ENCODE measurements at regions of chr6 and their contacts with region 1.

Region 1: DNA sequence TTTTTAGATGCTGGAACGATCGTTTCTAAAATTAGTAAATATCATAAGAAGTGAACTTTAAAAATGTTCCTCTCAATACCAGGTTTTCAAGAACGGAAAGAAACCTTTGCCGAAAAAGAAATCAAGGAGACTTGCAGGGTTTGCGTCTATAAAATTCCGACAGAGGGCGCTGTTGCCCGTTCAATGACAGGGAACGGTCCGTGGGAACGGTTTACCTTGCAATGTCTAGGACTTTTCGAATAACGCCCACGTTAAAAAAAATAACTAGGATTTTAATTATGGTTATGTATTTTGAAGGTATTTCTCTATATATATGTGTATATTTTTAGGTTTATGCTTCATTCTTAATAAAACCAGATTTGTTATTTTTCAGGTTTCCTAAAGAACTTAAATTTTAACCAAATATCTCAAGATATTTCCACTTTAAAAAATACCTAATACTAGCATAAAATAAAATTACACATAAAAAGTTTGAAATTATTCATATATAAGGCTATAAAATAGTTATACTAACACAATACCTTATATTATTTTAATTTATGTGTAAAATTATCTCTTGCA is 2.5 kb upstream of the TFAP2B start:
- DNase-seq: peak; percentile 70 to 81 (median 72)
- ATAC-seq: peak; percentile 88 to 94 (median 91)
- H3K4me3 ChIP-seq: peak overlapping the region; percentile 32 to 61 (median 48)
- H3K27ac ChIP-seq: no peak overlapping the region
- H3K4me1 ChIP-seq: peaks cover 0 to 8% (median 3%) of the 10 kb centered on the region in 4 donors
- H3K27me3 ChIP-seq: peaks cover 9 to 44% of the 10 kb centered on the region in 2 donors
- CTCF ChIP-seq: peak; percentile 79 to 86 (median 82)
- POLR2A ChIP-seq: no peak

Region 2: GRCh38 chr6:50850223-50851048 is 34.2 kb after region 1 on chr6:
- intact Hi-C with region 1: no loop called
- DNase-seq: no peak
- ATAC-seq: peak; percentile 51 to 76 (median 63)
- H3K4me3 ChIP-seq: peak overlapping the region in 1 of 3 donors; percentile 8
- H3K27ac ChIP-seq: no peak overlapping the region
- H3K4me1 ChIP-seq: peaks cover 0 to 13% (median 0%) of the 10 kb centered on the region in 4 donors
- H3K27me3 ChIP-seq: peaks cover 0 to 44% of the 10 kb centered on the region in 2 donors
- CTCF ChIP-seq: no peak
- POLR2A ChIP-seq: no peak

Region 3: DNA sequence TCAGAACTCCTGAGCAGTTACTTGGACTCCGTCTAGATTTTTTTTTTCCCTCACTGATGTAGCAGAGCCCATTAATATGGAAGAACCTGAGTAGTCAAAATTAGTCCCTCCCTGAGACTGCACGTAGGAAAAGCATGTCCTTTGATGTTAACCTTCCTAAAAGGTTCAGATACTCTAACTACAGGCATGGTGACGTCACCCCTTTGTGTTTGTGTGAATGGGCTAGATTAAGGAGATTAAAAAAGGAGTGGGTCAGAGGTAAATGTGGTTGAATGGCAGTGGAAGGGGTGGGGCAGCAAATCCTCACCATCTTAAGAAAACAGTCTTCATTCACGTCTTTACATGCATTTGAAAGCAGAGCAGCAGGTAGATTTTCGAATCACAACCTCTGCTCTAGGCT is 523.5 kb after region 1 on chr6:
- intact Hi-C with region 1: loop called in 1 of 2 experiments (anchors 10 kb)
- DNase-seq: no peak
- ATAC-seq: no peak
- H3K4me3 ChIP-seq: no peak overlapping the region
- H3K27ac ChIP-seq: no peak overlapping the region
- H3K4me1 ChIP-seq: peaks cover 0 to 19% (median 1%) of the 10 kb centered on the region in 4 donors
- H3K27me3 ChIP-seq: no peaks in the 10 kb centered on the region
- CTCF ChIP-seq: no peak
- POLR2A ChIP-seq: no peak

Region 4: GRCh38 chr6:51350308-51350904 is 534.2 kb after region 1 on chr6:
- intact Hi-C with region 1: loop called (anchors 10 kb)
- DNase-seq: no peak
- ATAC-seq: peak; percentile 46 to 58 (median 52)
- H3K4me3 ChIP-seq: no peak overlapping the region
- H3K27ac ChIP-seq: no peak overlapping the region
- H3K4me1 ChIP-seq: no peaks in the 10 kb centered on the region
- H3K27me3 ChIP-seq: no peaks in the 10 kb centered on the region
- CTCF ChIP-seq: peak; percentile 41 to 60 (median 56)
- POLR2A ChIP-seq: no peak

Region 5: DNA sequence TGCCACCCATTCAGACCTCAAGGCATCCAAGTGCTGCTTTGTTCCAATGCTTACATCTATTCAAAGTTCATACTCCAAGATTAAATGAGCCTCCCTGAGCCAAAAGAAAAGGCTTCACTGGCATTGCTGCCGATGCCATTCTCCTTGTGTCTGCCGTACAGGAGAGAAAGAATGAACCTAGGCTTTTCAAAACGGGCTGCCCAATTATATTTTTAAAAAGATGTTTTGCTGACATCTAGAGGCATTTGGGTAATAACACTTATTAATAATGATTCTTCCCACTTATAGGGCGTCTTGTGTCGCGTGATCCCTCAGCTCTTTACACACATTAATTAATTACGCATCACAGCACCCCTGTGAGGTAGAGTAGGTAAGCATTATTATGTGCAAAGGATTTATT is 725.7 kb after region 1 on chr6:
- intact Hi-C with region 1: loop called in 1 of 2 experiments (anchors 10 kb)
- DNase-seq: no peak
- ATAC-seq: peak; percentile 59 to 71 (median 69)
- H3K4me3 ChIP-seq: no peak overlapping the region
- H3K27ac ChIP-seq: no peak overlapping the region
- H3K4me1 ChIP-seq: no peaks in the 10 kb centered on the region
- H3K27me3 ChIP-seq: no peaks in the 10 kb centered on the region
- CTCF ChIP-seq: peak in 2 of 4 donors; percentile 28 to 34
- POLR2A ChIP-seq: no peak

Measured in right lobe of liver (tissue), 6 donors.